ENCODE measurements at regions of chr12 and their contacts with region 1.

Region 1: DNA sequence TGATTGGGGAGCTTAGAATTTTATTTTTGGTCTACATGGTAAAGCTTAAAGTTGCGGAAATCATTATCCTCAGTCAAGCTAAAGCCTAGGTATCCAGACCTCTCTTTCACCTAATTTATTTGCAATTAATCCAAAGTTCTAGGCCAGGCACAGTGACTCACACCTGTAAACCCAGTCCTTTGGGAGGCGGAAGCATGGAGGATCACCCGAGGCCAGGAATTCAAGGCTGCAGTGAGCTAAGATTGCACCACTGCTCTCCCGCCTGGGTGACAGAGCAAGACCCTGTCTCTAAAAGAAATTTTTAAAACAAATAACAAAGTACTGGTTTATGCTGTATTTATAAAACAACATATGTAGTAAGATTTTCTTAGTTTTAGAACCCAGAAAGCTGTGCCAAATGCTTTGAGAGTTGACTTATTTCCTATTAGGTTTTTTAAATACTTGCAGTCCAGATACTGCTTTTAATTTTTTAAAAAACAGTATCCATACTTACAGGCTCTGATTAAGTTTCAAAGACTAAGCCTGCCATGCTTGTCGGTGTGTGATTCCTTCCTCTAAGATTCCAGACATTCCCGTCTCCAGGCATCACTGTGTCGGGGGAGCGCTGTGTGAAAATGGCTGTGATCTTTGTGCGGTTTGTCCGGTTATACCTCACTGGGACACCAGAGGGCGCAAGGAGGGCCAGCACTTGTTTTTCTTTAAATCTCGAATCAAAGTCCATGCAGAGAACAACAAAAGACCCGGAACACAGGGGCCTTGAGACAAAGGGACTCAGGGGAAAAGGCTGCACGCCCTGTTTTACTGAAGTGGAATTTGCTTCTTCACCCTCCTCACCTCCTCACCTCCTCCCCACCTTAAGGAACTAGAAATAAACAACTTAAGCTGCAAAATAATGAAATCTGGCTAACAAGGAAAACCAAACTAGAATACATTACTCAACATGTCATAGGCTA is 24.6 kb upstream of the TMPO start:
- DNase-seq: peak; percentile 72
- H3K4me3 Mint-ChIP-seq: peak overlapping the region; percentile 24
- H3K27ac Mint-ChIP-seq: peak overlapping the region; percentile 84
- H3K4me1 Mint-ChIP-seq: peaks cover 8% of the 10 kb centered on the region
- H3K27me3 Mint-ChIP-seq: peaks cover 10% of the 10 kb centered on the region

Region 2: DNA sequence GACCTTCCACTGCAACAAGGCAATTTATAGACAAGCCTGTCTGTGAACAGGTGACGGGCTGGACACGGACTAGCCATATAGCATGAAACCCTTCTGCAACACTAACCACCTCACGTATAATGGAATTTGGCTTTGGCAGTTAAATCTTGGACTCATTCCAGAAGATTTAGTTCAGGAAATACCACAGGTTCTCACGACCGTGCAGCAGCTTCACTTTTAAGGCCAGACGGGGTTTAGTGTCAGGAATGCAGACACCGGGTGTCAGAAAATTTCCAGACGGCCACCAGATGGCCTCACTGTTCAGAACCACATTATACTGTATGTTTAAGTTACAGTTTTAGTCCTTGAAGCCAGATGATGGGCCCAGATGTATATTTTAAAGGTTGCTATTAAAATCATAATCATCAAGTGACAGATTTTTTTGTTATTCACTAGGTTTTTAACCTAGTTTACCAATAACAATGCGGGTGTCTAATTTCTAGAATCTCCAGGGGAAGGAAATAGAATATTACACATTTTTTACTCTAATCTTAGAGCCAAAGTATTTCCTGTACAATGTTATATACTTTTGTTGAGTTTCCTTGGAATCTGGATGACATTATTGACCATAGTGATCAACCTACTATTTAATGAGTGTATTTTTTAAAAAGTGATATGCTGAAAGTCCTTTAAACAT is 65.9 kb before region 1 on chr12:
- intact Hi-C with region 1: loop called (anchors 1 kb)
- DNase-seq: peak; percentile 18
- H3K4me3 Mint-ChIP-seq: no peak overlapping the region
- H3K27ac Mint-ChIP-seq: no peak overlapping the region
- H3K4me1 Mint-ChIP-seq: peaks cover 6% of the 10 kb centered on the region
- H3K27me3 Mint-ChIP-seq: peaks cover 7% of the 10 kb centered on the region

Region 3: DNA sequence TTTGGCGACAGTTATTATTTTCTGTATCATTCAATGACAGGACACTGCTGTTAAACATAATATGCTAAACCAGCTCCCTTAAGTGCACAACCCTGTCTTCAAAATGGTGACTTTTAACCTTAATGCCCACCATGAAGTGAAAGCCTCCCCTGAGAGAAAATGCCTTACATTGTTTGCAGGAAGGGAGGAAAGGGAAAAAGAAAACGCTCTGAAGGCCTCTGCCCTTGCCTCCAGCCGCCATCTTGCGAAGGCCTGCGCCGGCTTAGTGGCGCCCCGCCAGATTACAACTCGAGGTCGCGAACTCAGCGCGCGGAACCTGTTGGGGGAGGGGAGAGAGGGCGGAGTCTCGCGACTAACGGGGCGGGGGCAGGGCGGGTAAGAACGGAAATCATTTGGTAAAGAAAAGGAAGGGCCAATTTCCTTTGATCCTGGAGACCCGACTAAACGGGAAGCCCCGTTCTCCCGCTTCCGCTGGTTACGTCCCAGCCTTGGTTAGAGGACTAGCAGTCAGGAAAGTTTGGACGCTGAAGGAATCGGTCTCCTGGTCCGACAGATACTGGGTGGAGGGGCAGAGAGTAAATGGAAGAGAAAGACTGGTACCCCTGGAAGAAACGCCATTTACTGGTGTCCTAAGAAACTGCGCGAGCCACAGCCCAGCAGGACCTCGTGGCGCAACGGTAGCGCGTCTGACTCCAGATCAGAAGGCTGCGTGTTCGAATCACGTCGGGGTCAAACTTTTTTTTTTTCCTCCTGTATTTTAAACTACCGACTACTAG is 13.0 kb after region 1 on chr12:
- intact Hi-C with region 1: loop called (anchors 1 kb)
- DNase-seq: peak; percentile 90
- H3K4me3 Mint-ChIP-seq: peak overlapping the region; percentile 91
- H3K27ac Mint-ChIP-seq: peak overlapping the region; percentile 99
- H3K4me1 Mint-ChIP-seq: peaks cover 27% of the 10 kb centered on the region
- H3K27me3 Mint-ChIP-seq: peaks cover 8% of the 10 kb centered on the region

Region 4: GRCh38 chr12:98532681-98533304 is 42.0 kb after region 1 on chr12:
- intact Hi-C with region 1: loop called (anchors 1 kb)
- DNase-seq: no peak
- H3K4me3 Mint-ChIP-seq: no peak overlapping the region
- H3K27ac Mint-ChIP-seq: no peak overlapping the region
- H3K4me1 Mint-ChIP-seq: peaks cover 18% of the 10 kb centered on the region
- H3K27me3 Mint-ChIP-seq: no peaks in the 10 kb centered on the region

Region 5: DNA sequence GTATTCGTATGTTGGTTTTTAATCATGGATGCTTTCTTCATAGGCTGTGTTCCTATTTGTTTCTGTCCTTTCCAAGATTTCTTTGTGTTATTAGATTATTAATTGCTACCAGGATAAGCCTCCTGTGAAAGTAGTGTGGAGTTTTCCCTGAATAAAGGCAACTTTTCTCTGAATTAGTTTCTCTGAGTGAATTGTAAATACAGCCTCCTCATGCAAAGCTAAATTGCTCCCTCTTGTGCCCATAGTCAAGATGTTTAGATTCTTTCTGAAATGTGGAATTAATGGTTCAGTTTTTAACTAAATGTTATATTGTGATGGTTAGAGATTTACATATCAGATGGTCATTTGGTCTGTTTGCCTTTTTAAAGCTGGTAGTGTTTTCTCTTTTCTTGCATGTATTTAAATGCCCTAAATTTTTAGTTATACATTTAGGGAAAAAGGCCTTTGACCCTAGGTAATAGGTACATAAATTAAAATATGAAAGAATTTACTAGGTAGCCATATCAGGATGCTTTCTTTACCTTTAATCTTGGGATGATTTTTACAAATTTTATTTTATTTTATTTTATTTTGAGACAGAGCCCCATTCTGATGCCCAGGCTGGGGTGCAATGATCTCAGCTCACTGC is 163.2 kb after region 1 on chr12:
- intact Hi-C with region 1: loop called (anchors 1 kb)
- DNase-seq: no peak
- H3K4me3 Mint-ChIP-seq: no peak overlapping the region
- H3K27ac Mint-ChIP-seq: no peak overlapping the region
- H3K4me1 Mint-ChIP-seq: peaks cover 18% of the 10 kb centered on the region
- H3K27me3 Mint-ChIP-seq: no peaks in the 10 kb centered on the region

Region 6: GRCh38 chr12:98814254-98814653 is 323.5 kb after region 1 on chr12:
- intact Hi-C with region 1: no loop called
- DNase-seq: no peak
- H3K4me3 Mint-ChIP-seq: no peak overlapping the region
- H3K27ac Mint-ChIP-seq: no peak overlapping the region
- H3K4me1 Mint-ChIP-seq: no peaks in the 10 kb centered on the region
- H3K27me3 Mint-ChIP-seq: peaks cover 22% of the 10 kb centered on the region